Heart left ventricle (tissue), 16 donors: ENCODE measurements at regions of chr2 and their contacts with region 1.

Region 1: GRCh38 chr2:177263451-177264208 is 897 bp downstream of the NFE2L2 start:
- DNase-seq: peak; percentile 98 to 99 (median 99)
- ATAC-seq: peak; percentile 74 to 85 (median 79)
- H3K4me3 ChIP-seq: peak overlapping the region; percentile 72 to 97 (median 90)
- H3K27ac ChIP-seq: peak overlapping the region; percentile 97 to 100 (median 99)
- H3K4me1 ChIP-seq: peaks cover 0 to 57% (median 43%) of the 10 kb centered on the region in 12 donors
- H3K27me3 ChIP-seq: no peaks in the 10 kb centered on the region
- CTCF ChIP-seq: peak; percentile 73 to 96 (median 87)
- POLR2A ChIP-seq: peak in 1 of 2 donors; percentile 58

Region 2: GRCh38 chr2:177212106-177212890 is 51.3 kb before region 1 on chr2 and contains the start of gene HNRNPA3:
- intact Hi-C with region 1: loop called (anchors 1 to 5 kb)
- DNase-seq: peak; percentile 99 to 100 (median 99)
- ATAC-seq: peak; percentile 94 to 97 (median 96)
- H3K4me3 ChIP-seq: peak within 1 kb of the TSS; percentile 60 to 96 (median 82)
- H3K27ac ChIP-seq: peak within 1 kb of the TSS; percentile 95 to 100 (median 99)
- H3K4me1 ChIP-seq: peaks cover 10 to 52% (median 45%) of the 10 kb centered on the region in 12 donors
- H3K27me3 ChIP-seq: no peaks in the 10 kb centered on the region
- CTCF ChIP-seq: peak in 9 of 12 donors; percentile 19 to 57 (median 35)
- POLR2A ChIP-seq: peak; percentile 30 to 86
- total RNA-seq, gene HNRNPA3: 12.7 to 110 (median 73.3) TPM

Region 3: DNA sequence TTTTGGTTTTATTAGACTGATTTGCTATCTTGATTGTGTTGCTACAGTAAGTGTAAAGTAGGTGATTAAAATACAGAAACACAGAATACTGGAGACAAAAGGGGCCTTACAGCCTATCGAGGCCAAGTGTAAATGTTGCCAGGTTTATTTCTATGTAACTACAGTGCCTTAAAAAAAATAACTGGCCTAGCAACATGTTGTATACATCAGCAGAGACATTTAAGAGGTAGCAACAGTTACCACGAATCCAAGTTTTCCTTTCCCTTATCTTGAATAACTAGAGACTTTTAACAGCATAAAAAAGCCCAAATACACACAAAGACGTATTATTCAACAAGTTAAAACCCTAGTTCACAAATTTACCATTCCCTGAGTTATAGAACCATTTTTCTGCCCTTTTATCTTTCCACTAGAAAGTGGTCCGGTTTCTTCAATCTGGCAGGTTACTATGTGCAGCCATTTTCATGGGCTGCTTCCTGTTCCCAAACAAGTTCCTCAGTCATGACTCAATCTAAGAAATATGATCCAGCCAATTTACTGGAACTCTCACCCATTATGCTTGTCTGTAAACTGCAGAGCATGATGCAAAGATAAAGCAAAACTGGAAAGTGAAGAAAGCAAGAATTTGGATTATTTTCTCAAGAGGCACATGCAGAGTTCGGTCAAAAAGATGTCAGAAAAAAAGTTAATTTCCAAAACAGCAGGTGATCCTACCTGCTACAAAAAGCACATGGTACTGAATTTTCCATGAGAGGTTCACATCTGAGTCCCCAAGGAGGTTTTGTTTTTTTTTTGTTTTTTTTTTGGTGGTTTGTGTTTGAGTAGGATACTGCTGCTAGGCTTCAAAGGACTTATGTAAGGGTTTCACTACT is 21.3 kb before region 1 on chr2:
- intact Hi-C with region 1: loop called in 1 of 10 experiments (anchors 2 kb)
- DNase-seq: no peak
- ATAC-seq: peak; percentile 45 to 80 (median 74)
- H3K4me3 ChIP-seq: peak overlapping the region in 8 of 12 donors; percentile 4 to 38 (median 25)
- H3K27ac ChIP-seq: peak overlapping the region; percentile 64 to 94 (median 82)
- H3K4me1 ChIP-seq: peaks cover 31 to 100% (median 97%) of the 10 kb centered on the region in 12 donors
- H3K27me3 ChIP-seq: no peaks in the 10 kb centered on the region
- CTCF ChIP-seq: no peak
- POLR2A ChIP-seq: no peak

Region 4: DNA sequence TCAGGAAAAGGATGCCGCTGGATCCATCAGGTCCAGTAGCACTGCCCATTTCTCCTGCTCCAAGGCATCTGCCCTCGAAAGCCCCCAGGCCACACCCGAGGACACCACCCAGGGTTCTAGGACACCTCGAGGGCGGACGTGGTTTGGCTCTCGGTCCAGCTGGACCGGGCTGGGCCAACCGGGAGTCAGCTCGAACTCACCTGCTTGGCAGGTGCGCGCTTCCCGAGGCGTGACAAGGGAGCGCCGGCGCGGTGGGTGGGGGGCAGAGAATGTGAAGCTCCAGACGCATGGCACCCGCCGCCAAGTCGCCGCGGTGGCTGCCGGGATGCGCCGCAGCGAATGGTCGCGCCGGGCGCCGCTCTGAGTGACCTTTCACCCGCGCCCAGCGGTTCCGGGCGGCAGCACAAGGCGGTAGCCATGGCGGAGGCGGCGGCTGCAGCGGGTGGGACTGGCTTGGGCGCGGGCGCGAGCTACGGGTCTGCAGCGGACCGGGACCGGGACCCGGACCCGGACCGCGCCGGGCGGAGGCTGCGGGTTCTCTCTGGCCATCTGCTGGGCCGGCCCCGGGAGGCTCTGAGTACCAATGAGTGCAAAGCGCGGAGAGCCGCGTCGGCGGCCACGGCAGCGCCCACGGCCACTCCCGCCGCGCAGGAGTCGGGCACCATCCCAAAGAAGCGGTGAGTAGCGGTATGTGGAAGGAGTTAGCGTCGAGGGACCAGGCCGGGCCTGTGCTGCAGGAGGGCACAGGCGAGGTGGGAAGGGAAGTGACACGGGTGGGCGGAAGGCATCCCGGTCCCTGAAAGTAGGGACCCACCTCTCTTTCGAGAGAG is 129.0 kb after region 1 on chr2 and contains the start of gene AGPS:
- intact Hi-C with region 1: loop called in 1 of 10 experiments (anchors 10 kb)
- DNase-seq: peak; percentile 79 to 91 (median 87)
- ATAC-seq: peak; percentile 89 to 98 (median 95)
- H3K4me3 ChIP-seq: peak within 1 kb of the TSS; percentile 48 to 96 (median 90)
- H3K27ac ChIP-seq: peak within 1 kb of the TSS; percentile 12 to 86 (median 80)
- H3K4me1 ChIP-seq: peaks cover 0 to 57% (median 30%) of the 10 kb centered on the region in 12 donors
- H3K27me3 ChIP-seq: no peaks in the 10 kb centered on the region
- CTCF ChIP-seq: peak in 6 of 12 donors; percentile 16 to 37 (median 20)
- POLR2A ChIP-seq: peak in 1 of 2 donors; percentile 63
- total RNA-seq, gene AGPS: 19.7 to 36.6 (median 26.2) TPM

Region 5: DNA sequence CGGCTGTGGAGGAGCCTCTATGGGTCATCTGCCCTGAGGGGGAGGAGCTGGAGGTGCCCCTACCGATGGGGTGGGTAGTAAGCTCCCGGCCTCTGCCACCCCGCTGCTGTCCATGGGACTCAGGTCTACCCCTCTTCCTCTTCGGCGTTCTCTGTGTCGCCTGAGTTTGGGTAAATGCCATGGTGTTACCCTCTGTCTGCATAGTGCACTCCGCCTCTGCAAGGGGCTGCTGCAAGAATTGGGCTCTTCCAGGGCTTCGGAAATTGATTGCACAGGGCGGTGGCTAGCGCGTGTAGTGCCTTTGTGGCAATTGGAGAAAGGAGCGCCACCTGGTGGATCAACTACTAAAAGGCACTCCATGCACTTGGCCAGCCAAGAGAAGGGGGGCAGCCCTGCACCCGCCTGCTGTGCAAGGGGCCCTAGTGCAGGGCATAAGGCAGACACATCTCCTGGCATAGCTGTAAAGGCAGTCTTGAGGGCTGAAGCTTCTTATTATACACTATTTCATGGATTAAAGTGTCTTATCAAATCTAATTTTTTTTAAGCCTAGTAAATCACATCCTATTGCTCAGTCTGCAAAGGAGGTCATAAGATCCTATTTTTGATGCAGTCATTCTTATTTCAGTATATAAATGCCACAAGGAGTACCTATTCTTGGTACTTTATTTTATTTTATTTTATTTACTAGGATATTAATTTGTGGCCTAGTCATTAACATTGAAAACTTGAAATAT is 500.1 kb after region 1 on chr2:
- intact Hi-C with region 1: loop called in 1 of 10 experiments (anchors 10 kb)
- DNase-seq: peak; percentile 70 to 81 (median 74)
- ATAC-seq: peak; percentile 49 to 89 (median 86)
- H3K4me3 ChIP-seq: peak overlapping the region in 1 of 12 donors; percentile 24
- H3K27ac ChIP-seq: no peak overlapping the region
- H3K4me1 ChIP-seq: peaks cover 0 to 15% (median 2%) of the 10 kb centered on the region in 12 donors
- H3K27me3 ChIP-seq: no peaks in the 10 kb centered on the region
- CTCF ChIP-seq: peak; percentile 74 to 90 (median 82)
- POLR2A ChIP-seq: no peak